ENCODE measurements at regions of chr20 and their contacts with region 1.

Region 1: GRCh38 chr20:1844325-1845162 is 50.7 kb upstream of the SIRPA start:
- DNase-seq: peak; percentile 86 to 94 (median 94)
- H3K4me3 ChIP-seq: peak overlapping the region in 1 of 3 experiments; percentile 22
- H3K4me3 Mint-ChIP-seq: peak overlapping the region in 1 of 2 donors; percentile 31
- H3K27ac ChIP-seq: peak overlapping the region; percentile 75 to 82
- H3K27ac Mint-ChIP-seq: peak overlapping the region; percentile 87 to 98 (median 95)
- H3K4me1 ChIP-seq: peaks cover 95 to 97% of the 10 kb centered on the region in 2 donors
- H3K4me1 Mint-ChIP-seq: peaks cover 95% of the 10 kb centered on the region
- H3K27me3 ChIP-seq: no peaks in the 10 kb centered on the region
- H3K27me3 Mint-ChIP-seq: peaks cover 1 to 10% (median 4%) of the 10 kb centered on the region in 3 donors
- CTCF ChIP-seq: no peak

Region 2: GRCh38 chr20:1802385-1803060 is 42.0 kb before region 1 on chr20:
- intact Hi-C with region 1: loop called (anchors 5 kb)
- DNase-seq: peak; percentile 73 to 84 (median 83)
- H3K4me3 ChIP-seq: peak overlapping the region; percentile 55 to 78 (median 69)
- H3K4me3 Mint-ChIP-seq: peak overlapping the region; percentile 85 to 97
- H3K27ac ChIP-seq: peak overlapping the region; percentile 86 to 95
- H3K27ac Mint-ChIP-seq: peak overlapping the region; percentile 87 to 97 (median 94)
- H3K4me1 ChIP-seq: peaks cover 56 to 65% of the 10 kb centered on the region in 2 donors
- H3K4me1 Mint-ChIP-seq: peaks cover 56% of the 10 kb centered on the region
- H3K27me3 ChIP-seq: no peaks in the 10 kb centered on the region
- H3K27me3 Mint-ChIP-seq: peaks cover 0 to 1% (median 0%) of the 10 kb centered on the region in 3 donors
- CTCF ChIP-seq: peak; percentile 82

Region 3: GRCh38 chr20:1881240-1881835 is 36.8 kb after region 1 on chr20:
- intact Hi-C with region 1: loop called in 1 of 2 experiments (anchors 5 kb)
- DNase-seq: no peak
- H3K4me3 ChIP-seq: no peak overlapping the region
- H3K4me3 Mint-ChIP-seq: peak overlapping the region in 1 of 2 donors; percentile 21
- H3K27ac ChIP-seq: no peak overlapping the region
- H3K27ac Mint-ChIP-seq: peak overlapping the region in 1 of 7 donors; percentile 52
- H3K4me1 ChIP-seq: peaks cover 43 to 46% of the 10 kb centered on the region in 2 donors
- H3K4me1 Mint-ChIP-seq: peaks cover 52% of the 10 kb centered on the region
- H3K27me3 ChIP-seq: no peaks in the 10 kb centered on the region
- H3K27me3 Mint-ChIP-seq: peaks cover 28 to 39% (median 31%) of the 10 kb centered on the region in 3 donors
- CTCF ChIP-seq: no peak

Region 4: GRCh38 chr20:1946762-1947534 is 102.4 kb after region 1 on chr20:
- intact Hi-C with region 1: loop called in 1 of 2 experiments (anchors 10 kb)
- DNase-seq: peak; percentile 95 to 97 (median 95)
- H3K4me3 ChIP-seq: peak overlapping the region; percentile 19 to 72 (median 29)
- H3K4me3 Mint-ChIP-seq: peak overlapping the region; percentile 79 to 95
- H3K27ac ChIP-seq: peak overlapping the region; percentile 96 to 97
- H3K27ac Mint-ChIP-seq: peak overlapping the region; percentile 97 to 100 (median 99)
- H3K4me1 ChIP-seq: peaks cover 88 to 95% of the 10 kb centered on the region in 2 donors
- H3K4me1 Mint-ChIP-seq: peaks cover 92% of the 10 kb centered on the region
- H3K27me3 ChIP-seq: no peaks in the 10 kb centered on the region
- H3K27me3 Mint-ChIP-seq: peaks cover 0 to 1% (median 0%) of the 10 kb centered on the region in 3 donors
- CTCF ChIP-seq: no peak